Panc1 (cell line): ENCODE measurements at regions of chr9 and their contacts with region 1.

Region 1: GRCh38 chr9:124735121-124735520 is 36.0 kb downstream of the NR6A1 start:
- DNase-seq: no peak
- ATAC-seq: peak; percentile 66
- H3K4me3 ChIP-seq: no peak overlapping the region
- H3K27ac ChIP-seq: peak overlapping the region; percentile 2; the same call in 1 of the 2 replicates
- H3K4me1 ChIP-seq: peaks cover 33% of the 10 kb centered on the region
- H3K27me3 ChIP-seq: no peaks in the 10 kb centered on the region
- CTCF ChIP-seq: no peak

Region 2: DNA sequence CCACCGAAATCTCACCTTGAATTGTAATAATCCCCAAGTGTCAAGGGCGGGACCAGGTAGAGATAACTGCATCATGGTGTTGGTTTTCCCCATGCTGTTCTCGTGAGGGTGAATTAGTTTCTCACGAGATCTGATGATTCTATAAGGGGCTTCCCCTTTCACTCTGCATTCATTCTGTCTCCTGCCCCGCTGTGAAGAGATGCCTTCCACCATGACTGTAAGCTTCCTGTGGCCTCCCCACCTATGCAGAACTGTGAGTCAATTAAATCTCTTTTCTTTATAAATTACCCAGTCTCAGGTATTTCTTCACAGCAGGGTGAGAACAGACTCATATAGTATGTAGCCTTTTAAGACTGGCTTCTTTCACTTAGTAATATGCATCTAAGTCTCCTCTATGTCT is 99.8 kb before region 1 on chr9:
- CTCF ChIA-PET with region 1: no interaction called
- POLR2A ChIA-PET with region 1: no interaction called
- in situ Hi-C with region 1: no loop called
- intact Hi-C with region 1: no loop called
- DNase-seq: no peak
- ATAC-seq: no peak
- H3K4me3 ChIP-seq: no peak overlapping the region
- H3K27ac ChIP-seq: no peak overlapping the region
- H3K4me1 ChIP-seq: no peaks in the 10 kb centered on the region
- H3K27me3 ChIP-seq: no peaks in the 10 kb centered on the region
- CTCF ChIP-seq: no peak

Region 3: DNA sequence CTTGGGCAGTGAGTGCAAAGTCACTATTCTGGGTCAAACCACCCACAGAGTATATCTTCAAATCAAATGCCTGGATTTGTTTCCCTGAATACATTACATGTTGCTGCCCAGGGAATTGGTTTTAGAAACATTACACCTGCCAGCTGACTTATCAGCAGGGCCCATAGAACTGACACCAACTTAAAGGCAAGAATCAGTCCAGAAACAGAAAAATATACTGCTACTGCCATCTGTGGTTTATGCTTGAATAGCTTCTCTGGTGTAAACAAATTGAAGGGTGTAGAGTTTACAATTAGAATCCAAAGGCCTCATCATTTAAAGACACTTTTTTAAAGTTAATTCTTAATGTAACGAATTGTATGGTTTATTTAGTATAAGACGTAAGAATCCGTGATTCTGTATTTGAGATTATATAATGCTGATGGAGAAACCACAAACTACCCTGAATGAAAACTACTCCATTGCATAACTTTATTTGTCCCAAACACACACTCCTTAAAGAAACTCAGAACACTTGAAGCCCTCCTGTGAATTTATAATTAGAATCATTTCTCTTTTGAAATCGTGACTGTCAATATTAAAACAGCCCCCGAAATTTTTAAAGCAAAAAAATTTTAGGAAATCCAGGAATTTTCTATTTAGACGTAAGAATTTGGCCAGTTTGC is 29.8 kb after region 1 on chr9:
- CTCF ChIA-PET with region 1: interaction called, 10 read pairs
- POLR2A ChIA-PET with region 1: interaction called, 12 read pairs
- in situ Hi-C with region 1: no loop called
- intact Hi-C with region 1: no loop called
- DNase-seq: no peak
- ATAC-seq: no peak; the same call in 1 of the 2 replicates
- H3K4me3 ChIP-seq: no peak overlapping the region
- H3K27ac ChIP-seq: no peak overlapping the region
- H3K4me1 ChIP-seq: peaks cover 35% of the 10 kb centered on the region
- H3K27me3 ChIP-seq: no peaks in the 10 kb centered on the region
- CTCF ChIP-seq: peak; percentile 36; the same call in 1 of the 2 replicates